HEK293 (cell line): ENCODE measurements at regions of chr16 and their contacts with region 1.

Region 1: GRCh38 chr16:12067714-12068401 is 91.3 kb downstream of the SNX29 start:
- H3K4me3 ChIP-seq: no peak overlapping the region
- H3K27ac ChIP-seq: no peak overlapping the region
- H3K4me1 ChIP-seq: no peaks in the 10 kb centered on the region
- CTCF ChIP-seq: peak; percentile 76

Region 2: GRCh38 chr16:11396241-11397048 is 671.4 kb before region 1 on chr16:
- CTCF ChIA-PET with region 1: interaction called, 10 read pairs
- POLR2A ChIA-PET with region 1: no interaction called
- H3K4me3 ChIP-seq: no peak overlapping the region
- H3K27ac ChIP-seq: no peak overlapping the region
- H3K4me1 ChIP-seq: no peaks in the 10 kb centered on the region
- CTCF ChIP-seq: peak; percentile 93

Region 3: DNA sequence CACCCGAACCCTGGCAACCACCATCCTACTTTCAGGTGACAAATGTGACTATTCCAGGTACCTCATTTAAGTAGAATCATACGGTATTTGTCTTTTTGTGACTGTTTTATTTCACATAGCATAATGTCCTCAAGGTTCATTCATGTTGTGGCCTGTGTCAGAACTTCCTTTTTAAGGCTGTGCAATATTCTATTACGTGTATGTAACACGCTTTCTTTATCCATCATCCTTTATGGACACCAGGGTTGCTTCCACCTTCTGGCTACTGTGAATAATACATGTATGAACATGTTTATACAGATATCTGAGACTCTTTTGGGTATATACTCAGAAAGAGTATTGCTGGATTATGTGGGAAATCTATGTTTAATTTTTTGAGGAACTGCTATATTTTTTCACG is 187.9 kb before region 1 on chr16:
- CTCF ChIA-PET with region 1: interaction called, 14 read pairs
- POLR2A ChIA-PET with region 1: interaction called, 3 read pairs
- H3K4me3 ChIP-seq: no peak overlapping the region
- H3K27ac ChIP-seq: no peak overlapping the region
- H3K4me1 ChIP-seq: no peaks in the 10 kb centered on the region
- CTCF ChIP-seq: no peak

Region 4: GRCh38 chr16:11949527-11949926 is 118.3 kb before region 1 on chr16:
- CTCF ChIA-PET with region 1: interaction called, 21 read pairs
- POLR2A ChIA-PET with region 1: no interaction called
- H3K4me3 ChIP-seq: no peak overlapping the region
- H3K27ac ChIP-seq: no peak overlapping the region
- H3K4me1 ChIP-seq: no peaks in the 10 kb centered on the region
- CTCF ChIP-seq: peak; percentile 23; the same call in 1 of the 2 replicates

Region 5: DNA sequence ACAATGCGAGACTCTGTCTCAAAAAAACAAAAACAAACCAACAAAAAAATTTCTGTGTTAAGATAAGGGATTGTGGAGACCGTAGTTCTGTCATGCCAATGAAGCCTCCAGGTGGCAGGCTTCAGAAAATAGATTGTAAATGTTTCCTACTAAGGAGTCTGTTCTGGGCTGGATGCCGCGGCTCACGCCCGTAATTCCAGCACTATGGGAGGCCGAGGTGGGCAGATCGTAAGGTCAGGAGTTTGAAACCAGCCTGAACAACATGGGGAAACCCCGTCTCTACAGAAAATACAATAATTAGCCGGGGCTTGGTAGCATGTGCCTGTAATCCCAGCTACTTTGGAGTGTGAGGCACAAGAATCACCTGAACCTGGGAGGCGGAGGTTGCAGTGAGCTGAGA is 95.7 kb before region 1 on chr16:
- CTCF ChIA-PET with region 1: interaction called, 20 read pairs
- POLR2A ChIA-PET with region 1: interaction called, 10 read pairs
- H3K4me3 ChIP-seq: no peak overlapping the region
- H3K27ac ChIP-seq: no peak overlapping the region
- H3K4me1 ChIP-seq: no peaks in the 10 kb centered on the region
- CTCF ChIP-seq: peak; percentile 32; the same call in 1 of the 2 replicates

Region 6: DNA sequence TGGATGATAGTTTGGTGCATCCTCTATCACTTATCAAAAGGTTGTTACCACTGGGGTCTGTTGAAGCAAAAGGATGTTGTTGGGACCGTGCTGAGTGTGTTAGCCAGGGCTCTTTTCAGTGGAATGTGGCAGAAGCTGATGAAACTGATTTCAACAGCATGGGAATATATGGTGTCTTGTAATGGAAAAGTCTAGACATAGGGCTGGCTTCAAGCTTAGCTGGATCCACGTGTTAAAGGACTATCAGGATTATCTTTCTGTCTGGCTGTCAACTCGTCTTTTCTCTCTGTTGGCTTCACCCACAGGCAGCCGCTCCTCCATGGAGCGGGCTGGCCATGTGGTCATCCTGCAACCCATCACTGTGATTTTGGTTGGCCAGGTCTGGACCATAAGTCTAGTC is 82.6 kb before region 1 on chr16:
- CTCF ChIA-PET with region 1: interaction called, 10 read pairs
- POLR2A ChIA-PET with region 1: no interaction called
- H3K4me3 ChIP-seq: no peak overlapping the region
- H3K27ac ChIP-seq: no peak overlapping the region
- H3K4me1 ChIP-seq: no peaks in the 10 kb centered on the region
- CTCF ChIP-seq: no peak

Region 7: DNA sequence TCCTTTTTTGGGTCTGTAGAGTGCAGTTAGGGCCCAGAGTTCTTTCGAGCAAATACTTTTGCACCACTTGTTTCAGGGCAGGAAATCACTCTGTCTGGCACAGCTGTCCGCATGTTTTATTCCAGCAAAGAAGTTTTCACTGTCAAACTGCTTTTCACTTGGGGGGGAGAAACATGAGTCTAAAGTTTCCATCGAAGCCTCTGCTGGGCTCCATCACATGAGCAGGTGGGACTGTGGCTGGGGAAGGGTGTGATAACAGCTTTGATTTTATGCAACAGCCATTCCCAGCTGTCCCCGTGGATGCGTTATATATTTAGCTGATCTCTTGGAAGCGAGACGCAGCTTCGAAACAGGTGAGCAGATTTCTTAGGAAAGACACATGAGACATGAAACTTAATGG is 197.2 kb after region 1 on chr16:
- CTCF ChIA-PET with region 1: no interaction called
- POLR2A ChIA-PET with region 1: no interaction called
- H3K4me3 ChIP-seq: no peak overlapping the region
- H3K27ac ChIP-seq: no peak overlapping the region
- H3K4me1 ChIP-seq: no peaks in the 10 kb centered on the region
- CTCF ChIP-seq: no peak